ENCODE measurements at regions of chr5 and their contacts with region 1.

Region 1: GRCh38 chr5:65742565-65743231 is 20.7 kb downstream of the NLN start:
- DNase-seq: no peak
- H3K4me3 ChIP-seq: no peak overlapping the region
- H3K27ac ChIP-seq: no peak overlapping the region
- H3K4me1 ChIP-seq: peaks cover 0 to 6% (median 0%) of the 10 kb centered on the region in 4 donors
- H3K27me3 ChIP-seq: no peaks in the 10 kb centered on the region
- CTCF ChIP-seq: peak; percentile 52 to 69 (median 57)
- EP300 ChIP-seq: no peak
- POLR2A ChIP-seq: no peak

Region 2: GRCh38 chr5:66144074-66144833 is 401.6 kb after region 1 on chr5 and contains the start of gene SREK1:
- in situ Hi-C with region 1: loop called in 1 of 4 experiments (anchors 25 kb)
- intact Hi-C with region 1: no loop called
- DNase-seq: peak; percentile 93
- H3K4me3 ChIP-seq: peak within 1 kb of the TSS; percentile 63 to 84 (median 74)
- H3K27ac ChIP-seq: peak within 1 kb of the TSS; percentile 97 to 99 (median 99)
- H3K4me1 ChIP-seq: peaks cover 17 to 35% (median 28%) of the 10 kb centered on the region in 4 donors
- H3K27me3 ChIP-seq: no peaks in the 10 kb centered on the region
- CTCF ChIP-seq: peak in 1 of 5 experiments; percentile 12
- EP300 ChIP-seq: no peak
- POLR2A ChIP-seq: peak; percentile 94
- total RNA-seq, gene SREK1: 81.6 to 152 (median 129) TPM

Region 3: GRCh38 chr5:66171349-66172344 is 428.9 kb after region 1 on chr5:
- in situ Hi-C with region 1: loop called in 1 of 4 experiments (anchors 25 kb)
- intact Hi-C with region 1: no loop called
- DNase-seq: peak; percentile 11
- H3K4me3 ChIP-seq: no peak overlapping the region
- H3K27ac ChIP-seq: no peak overlapping the region
- H3K4me1 ChIP-seq: peaks cover 0 to 8% (median 0%) of the 10 kb centered on the region in 4 donors
- H3K27me3 ChIP-seq: no peaks in the 10 kb centered on the region
- CTCF ChIP-seq: peak in 4 of 5 experiments; percentile 29 to 39 (median 37)
- EP300 ChIP-seq: no peak
- POLR2A ChIP-seq: no peak

Region 4: GRCh38 chr5:67591491-67591890 is 1848.8 kb after region 1 on chr5:
- in situ Hi-C with region 1: no loop called
- intact Hi-C with region 1: no loop called
- DNase-seq: no peak
- H3K4me3 ChIP-seq: no peak overlapping the region
- H3K27ac ChIP-seq: no peak overlapping the region
- H3K4me1 ChIP-seq: no peaks in the 10 kb centered on the region
- H3K27me3 ChIP-seq: no peaks in the 10 kb centered on the region
- CTCF ChIP-seq: no peak
- EP300 ChIP-seq: no peak
- POLR2A ChIP-seq: no peak

Measured in transverse colon (tissue), 4 donors.